Endothelial cell of umbilical vein (primary cell): ENCODE measurements at regions of chr1 and their contacts with region 1.

Region 1: GRCh38 chr1:226062558-226063223 is at the start of gene H3-3A:
- DNase-seq: peak; percentile 94
- H3K4me3 ChIP-seq: peak within 1 kb of the TSS; percentile 68 to 99 (median 90)
- H3K27ac ChIP-seq: peak within 1 kb of the TSS; percentile 95
- H3K4me1 ChIP-seq: peaks cover 24% of the 10 kb centered on the region
- H3K27me3 ChIP-seq: no peaks in the 10 kb centered on the region
- CTCF ChIP-seq: no peak
- POLR2A ChIP-seq: peak; percentile 95
- total RNA-seq, gene H3-3A: 448 and 477 TPM in 2 replicates

Region 2: DNA sequence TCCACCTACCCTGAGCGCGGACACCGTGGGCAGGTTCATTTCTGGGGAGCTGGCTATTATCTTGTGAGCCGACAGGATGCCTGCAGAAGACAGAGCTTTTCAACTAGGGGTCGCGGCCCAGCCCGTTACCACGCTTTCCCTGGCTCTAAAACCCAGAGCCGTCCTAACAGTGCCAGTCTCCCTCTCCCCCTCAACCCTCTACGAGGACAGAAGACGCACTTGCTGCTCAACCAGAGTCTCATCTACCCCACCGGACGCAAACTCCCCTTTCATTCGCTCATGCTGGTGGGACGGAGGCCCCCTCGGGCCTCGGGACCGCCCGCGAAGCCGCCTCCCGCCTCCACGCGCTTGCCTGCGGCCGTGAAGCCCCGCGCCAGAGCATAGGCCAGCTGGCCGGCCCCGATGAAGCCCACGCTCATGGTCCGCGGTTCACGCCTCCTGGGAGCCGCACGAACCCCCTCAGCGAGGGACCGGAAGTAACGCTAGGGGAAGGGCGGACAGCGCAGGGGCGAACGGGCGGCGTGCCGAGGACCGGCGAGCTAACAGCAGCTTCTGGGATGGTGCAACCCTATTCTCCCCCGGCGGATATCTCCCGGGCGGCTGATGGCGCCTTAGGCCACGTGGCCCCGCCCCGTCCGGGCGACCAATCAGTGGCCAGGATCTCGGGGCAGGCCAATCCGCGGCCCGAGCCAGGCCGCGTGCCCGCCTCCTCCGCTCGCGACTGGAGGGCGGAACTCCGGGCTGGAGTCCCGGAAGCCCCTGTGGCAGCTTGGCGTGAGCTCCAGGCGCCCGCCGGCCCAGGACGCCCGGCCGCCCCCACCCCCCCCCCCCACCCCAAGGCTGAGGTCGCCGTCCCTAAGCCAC is 138.8 kb before region 1 on chr1 and contains the start of gene PYCR2:
- CTCF ChIA-PET with region 1: no interaction called
- POLR2A ChIA-PET with region 1: no interaction called
- dilution Hi-C with region 1: no loop called
- intact Hi-C with region 1: loop called (anchors 5 kb)
- DNase-seq: peak; percentile 97
- H3K4me3 ChIP-seq: peak within 1 kb of the TSS; percentile 15 to 69 (median 59)
- H3K27ac ChIP-seq: peak within 1 kb of the TSS; percentile 69
- H3K4me1 ChIP-seq: peaks cover 19% of the 10 kb centered on the region
- H3K27me3 ChIP-seq: no peaks in the 10 kb centered on the region
- CTCF ChIP-seq: no peak
- POLR2A ChIP-seq: peak; percentile 94
- total RNA-seq, gene PYCR2: 60.4 and 64.6 TPM in 2 replicates

Region 3: DNA sequence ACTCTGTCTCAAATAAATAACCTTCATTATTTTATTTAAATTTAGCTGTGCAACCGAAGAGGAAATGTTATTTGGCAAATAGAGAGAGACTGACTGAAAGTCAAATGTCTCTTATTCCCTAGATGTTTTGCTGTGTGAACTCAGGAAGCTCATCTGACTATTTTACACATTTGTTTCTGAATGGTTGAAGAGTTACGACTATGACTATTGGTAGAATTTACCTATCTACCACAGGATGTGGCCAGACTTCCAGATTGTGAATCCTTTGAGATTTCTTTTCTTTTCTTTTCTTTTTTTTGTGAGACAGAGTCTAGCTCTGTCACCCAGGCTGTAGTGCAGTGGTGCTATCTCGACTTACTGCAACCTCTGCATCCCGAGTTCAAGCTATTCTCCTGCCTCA is 58.3 kb before region 1 on chr1:
- CTCF ChIA-PET with region 1: interaction called, 27 read pairs
- POLR2A ChIA-PET with region 1: interaction called, 29 read pairs
- dilution Hi-C with region 1: no loop called
- intact Hi-C with region 1: loop called (anchors 1 kb)
- DNase-seq: no peak
- H3K4me3 ChIP-seq: no peak overlapping the region
- H3K27ac ChIP-seq: no peak overlapping the region
- H3K4me1 ChIP-seq: peaks cover 27% of the 10 kb centered on the region
- H3K27me3 ChIP-seq: no peaks in the 10 kb centered on the region
- CTCF ChIP-seq: no peak
- POLR2A ChIP-seq: no peak

Region 4: GRCh38 chr1:226074046-226074445 is 11.4 kb after region 1 on chr1:
- CTCF ChIA-PET with region 1: interaction called, 80 read pairs
- POLR2A ChIA-PET with region 1: interaction called, 13 read pairs
- dilution Hi-C with region 1: no loop called
- intact Hi-C with region 1: no loop called
- DNase-seq: no peak
- H3K4me3 ChIP-seq: no peak overlapping the region
- H3K27ac ChIP-seq: no peak overlapping the region
- H3K4me1 ChIP-seq: no peaks in the 10 kb centered on the region
- H3K27me3 ChIP-seq: no peaks in the 10 kb centered on the region
- CTCF ChIP-seq: no peak
- POLR2A ChIP-seq: no peak

Region 5: GRCh38 chr1:226109829-226110248 is 47.1 kb after region 1 on chr1:
- CTCF ChIA-PET with region 1: interaction called, 55 read pairs
- POLR2A ChIA-PET with region 1: interaction called, 6 read pairs
- dilution Hi-C with region 1: no loop called
- intact Hi-C with region 1: loop called (anchors 1 kb)
- DNase-seq: peak; percentile 72
- H3K4me3 ChIP-seq: peak overlapping the region; percentile 60 to 68 (median 63)
- H3K27ac ChIP-seq: peak overlapping the region; percentile 61
- H3K4me1 ChIP-seq: peaks cover 13% of the 10 kb centered on the region
- H3K27me3 ChIP-seq: no peaks in the 10 kb centered on the region
- CTCF ChIP-seq: no peak
- POLR2A ChIP-seq: no peak

Region 6: GRCh38 chr1:226201029-226201593 is 138.4 kb after region 1 on chr1:
- CTCF ChIA-PET with region 1: interaction called, 17 read pairs
- POLR2A ChIA-PET with region 1: no interaction called
- dilution Hi-C with region 1: no loop called
- intact Hi-C with region 1: no loop called
- DNase-seq: no peak
- H3K4me3 ChIP-seq: no peak overlapping the region
- H3K27ac ChIP-seq: no peak overlapping the region
- H3K4me1 ChIP-seq: no peaks in the 10 kb centered on the region
- H3K27me3 ChIP-seq: peaks cover 0 to 1% of the 10 kb centered on the region in 2 experiments
- CTCF ChIP-seq: peak in 1 of 2 donors; percentile 40
- POLR2A ChIP-seq: no peak